Heart left ventricle (tissue), 16 donors: ENCODE measurements at regions of chr2 and their contacts with region 1.

Region 1: DNA sequence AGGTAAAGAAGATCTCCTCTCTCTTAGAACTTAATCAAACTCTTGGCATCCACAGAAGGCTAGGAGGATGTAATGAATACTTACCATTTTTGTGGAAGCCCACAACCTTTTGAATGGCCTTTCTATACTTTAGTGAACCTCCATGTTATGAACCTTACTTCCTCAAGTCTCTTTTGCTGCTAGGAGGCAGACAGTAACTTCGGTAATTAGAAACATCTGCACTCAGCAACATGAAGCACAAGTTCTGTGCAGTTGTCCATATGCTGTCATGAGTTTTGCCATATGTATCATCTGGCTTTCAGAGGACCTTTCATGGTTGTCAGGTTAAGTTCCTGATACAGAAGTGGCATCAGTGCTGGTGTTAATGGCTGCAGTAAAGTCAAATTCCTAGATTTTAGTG is 50.4 kb downstream of the PDK1 start:
- DNase-seq: no peak
- ATAC-seq: no peak
- H3K4me3 ChIP-seq: no peak overlapping the region
- H3K27ac ChIP-seq: no peak overlapping the region
- H3K4me1 ChIP-seq: peaks cover 0 to 4% (median 0%) of the 10 kb centered on the region in 12 donors
- H3K27me3 ChIP-seq: no peaks in the 10 kb centered on the region
- CTCF ChIP-seq: no peak
- POLR2A ChIP-seq: no peak

Region 2: DNA sequence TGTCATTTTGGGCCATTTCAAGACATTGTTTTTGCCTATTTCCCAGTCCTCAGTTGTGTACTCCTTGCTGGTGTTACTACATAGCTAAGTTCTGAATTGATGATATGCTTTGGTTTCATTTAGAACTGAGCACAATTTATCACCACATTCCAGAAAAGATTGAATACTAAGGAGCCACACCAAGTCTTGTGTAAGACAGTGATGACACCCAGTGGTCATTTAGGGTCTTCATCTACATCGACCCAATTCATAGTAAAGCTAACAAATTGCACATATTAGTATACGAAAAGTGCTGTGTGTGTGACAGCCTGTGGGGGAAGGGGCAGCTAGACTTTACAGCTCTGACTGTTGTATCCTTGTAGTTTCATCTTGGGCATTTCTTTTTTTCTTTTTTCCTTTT is 492.7 kb before region 1 on chr2:
- intact Hi-C with region 1: no loop called
- DNase-seq: no peak
- ATAC-seq: peak in 1 of 4 donors; percentile 45
- H3K4me3 ChIP-seq: no peak overlapping the region
- H3K27ac ChIP-seq: no peak overlapping the region
- H3K4me1 ChIP-seq: no peaks in the 10 kb centered on the region
- H3K27me3 ChIP-seq: peaks cover 2 to 63% (median 20%) of the 10 kb centered on the region in 9 donors
- CTCF ChIP-seq: peak in 11 of 12 donors; percentile 8 to 54 (median 35)
- POLR2A ChIP-seq: no peak

Region 3: GRCh38 chr2:172674034-172674967 is 68.0 kb after region 1 on chr2:
- intact Hi-C with region 1: loop called in 1 of 10 experiments (anchors 10 kb)
- DNase-seq: peak in 4 of 5 donors; percentile 31 to 45 (median 36)
- ATAC-seq: peak in 3 of 4 donors; percentile 58 to 78 (median 72)
- H3K4me3 ChIP-seq: peak overlapping the region in 5 of 12 donors; percentile 8 to 33 (median 20)
- H3K27ac ChIP-seq: no peak overlapping the region
- H3K4me1 ChIP-seq: peaks cover 0 to 4% (median 0%) of the 10 kb centered on the region in 12 donors
- H3K27me3 ChIP-seq: no peaks in the 10 kb centered on the region
- CTCF ChIP-seq: peak; percentile 41 to 77 (median 52)
- POLR2A ChIP-seq: no peak

Region 4: DNA sequence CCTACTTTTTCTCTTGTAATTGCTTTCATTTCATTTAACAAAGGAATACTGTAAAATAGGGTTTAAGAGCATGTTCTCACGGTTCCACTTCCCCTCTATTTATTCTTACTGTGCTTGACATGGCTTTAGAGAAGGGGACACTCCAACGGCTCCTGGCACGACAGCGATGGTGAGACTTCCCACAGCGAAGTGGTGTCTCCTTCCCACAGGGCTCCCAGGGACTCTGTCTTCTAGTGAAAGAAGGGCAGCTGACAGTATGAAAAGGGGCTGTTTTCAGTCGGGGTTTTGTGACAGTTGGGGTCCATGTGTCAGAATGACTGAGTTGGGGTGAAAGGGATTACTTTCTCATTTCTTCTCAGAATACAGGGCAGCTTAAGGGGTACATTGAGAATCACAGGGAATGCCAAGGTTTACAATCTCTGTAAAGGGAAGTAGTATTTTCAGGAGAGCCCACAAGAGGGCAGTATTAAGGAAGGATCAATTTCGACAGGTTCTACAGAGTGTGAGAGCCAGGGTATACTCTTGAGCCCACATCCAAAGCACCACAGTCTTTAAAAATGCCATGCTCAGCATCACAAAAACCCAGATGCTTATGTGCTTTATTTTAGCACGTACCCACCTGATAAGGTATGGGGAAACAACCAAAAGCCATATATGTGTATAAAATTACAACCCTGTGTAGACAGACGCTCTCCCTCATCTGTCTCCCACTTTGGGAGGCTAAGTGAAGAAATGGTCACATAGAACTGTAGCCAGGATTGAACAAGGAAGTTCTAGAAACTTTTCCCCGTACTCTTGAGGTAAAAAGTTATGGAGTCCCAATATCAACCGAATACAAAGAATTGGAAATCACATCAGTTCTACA is 98.0 kb after region 1 on chr2:
- intact Hi-C with region 1: loop called in 1 of 10 experiments (anchors 10 kb)
- DNase-seq: no peak
- ATAC-seq: peak in 3 of 4 donors; percentile 52 to 67 (median 54)
- H3K4me3 ChIP-seq: no peak overlapping the region
- H3K27ac ChIP-seq: no peak overlapping the region
- H3K4me1 ChIP-seq: no peaks in the 10 kb centered on the region
- H3K27me3 ChIP-seq: peaks cover 0 to 6% (median 0%) of the 10 kb centered on the region in 9 donors
- CTCF ChIP-seq: peak; percentile 38 to 67 (median 48)
- POLR2A ChIP-seq: no peak